IMR-90 (cell line): ENCODE measurements at regions of chr10 and their contacts with region 1.

Region 1: GRCh38 chr10:88926566-88927415 is 25.8 kb downstream of the ACTA2 start:
- DNase-seq: peak; percentile 96
- ATAC-seq: peak; percentile 70
- H3K4me3 ChIP-seq: no peak overlapping the region
- H3K27ac ChIP-seq: peak overlapping the region; percentile 100
- H3K4me1 ChIP-seq: peaks cover 20% of the 10 kb centered on the region
- H3K27me3 ChIP-seq: no peaks in the 10 kb centered on the region
- CTCF ChIP-seq: no peak
- POLR2A ChIP-seq: no peak
- RAD21 ChIP-seq: no peak

Region 2: GRCh38 chr10:88880282-88881076 is 46.3 kb before region 1 on chr10:
- CTCF ChIA-PET with region 1: interaction called, 3 read pairs
- POLR2A ChIA-PET with region 1: interaction called, 11 read pairs
- dilution Hi-C with region 1: no loop called
- in situ Hi-C with region 1: no loop called
- intact Hi-C with region 1: loop called (anchors 2 kb)
- DNase-seq: peak; percentile 80
- ATAC-seq: peak; percentile 81
- H3K4me3 ChIP-seq: peak overlapping the region; percentile 90
- H3K27ac ChIP-seq: peak overlapping the region; percentile 98
- H3K4me1 ChIP-seq: peaks cover 14% of the 10 kb centered on the region
- H3K27me3 ChIP-seq: no peaks in the 10 kb centered on the region
- CTCF ChIP-seq: peak; percentile 21
- POLR2A ChIP-seq: peak; percentile 54; the same call in 1 of the 2 replicates
- RAD21 ChIP-seq: no peak